Activated T-helper 2 cell treated with anti-CD3 and anti-CD28 coated beads, Interferon-gamma antibody, Interleukin-2, Interleukin-4, amounts not matched to agents 10 μg/mL and 5 μg/mL and 100 μg/mL, durations not matched to agents 14 hours and 24 hours and 36 hours (primary cell): ENCODE measurements at regions of chr16 and their contacts with region 1.

Region 1: DNA sequence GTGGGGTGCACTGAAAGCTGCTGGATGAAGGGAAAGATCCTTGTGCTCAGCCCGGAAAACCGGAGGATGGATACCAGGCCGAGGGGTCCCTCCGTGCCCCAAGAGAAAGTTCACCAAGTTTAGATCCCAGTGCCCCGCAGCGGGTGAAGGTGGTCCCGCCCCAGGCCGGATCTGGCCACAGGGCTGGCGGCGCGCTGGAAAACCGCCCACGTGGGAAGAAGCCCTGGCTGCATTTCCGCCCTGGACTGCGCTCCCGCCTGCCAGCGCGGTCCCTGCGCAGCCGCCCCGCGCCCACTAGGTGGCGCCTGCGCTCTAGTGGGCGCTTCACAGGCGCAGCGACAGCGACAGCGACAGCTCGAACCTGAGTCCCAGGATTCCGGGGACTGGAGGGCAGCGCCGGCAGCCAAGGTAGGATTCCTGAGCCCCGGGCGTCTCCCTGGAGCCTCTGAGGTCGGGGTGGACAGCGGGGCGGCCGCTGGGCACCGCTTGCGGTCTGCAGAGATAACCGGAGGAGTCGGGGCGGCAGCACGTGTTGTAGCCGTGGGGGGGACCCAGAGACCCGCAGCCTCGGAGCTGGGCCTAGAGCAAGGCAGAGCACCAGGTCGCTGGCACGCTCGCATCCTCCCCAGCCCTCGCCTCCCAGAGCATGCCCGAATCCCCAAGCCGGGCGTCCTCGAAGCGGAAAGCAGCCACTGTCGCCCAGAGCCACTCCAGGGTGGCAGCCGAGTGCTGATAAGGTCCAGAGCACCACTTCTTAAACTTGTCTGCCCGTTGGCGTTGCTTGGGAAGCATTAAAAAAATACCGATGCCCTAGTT is at the start of gene CHD9:
- DNase-seq: peak; percentile 69
- H3K4me3 Mint-ChIP-seq: peak within 1 kb of the TSS; percentile 84
- H3K27ac Mint-ChIP-seq: peak within 1 kb of the TSS; percentile 79
- H3K4me1 Mint-ChIP-seq: peaks cover 45% of the 10 kb centered on the region
- H3K27me3 Mint-ChIP-seq: no peaks in the 10 kb centered on the region
- total RNA-seq, gene CHD9: 25.0 and 27.1 TPM in 2 replicates

Region 2: GRCh38 chr16:52997922-52998321 is 57.0 kb before region 1 on chr16:
- intact Hi-C with region 1: no loop called
- DNase-seq: no peak
- H3K4me3 Mint-ChIP-seq: no peak overlapping the region
- H3K27ac Mint-ChIP-seq: no peak overlapping the region
- H3K4me1 Mint-ChIP-seq: no peaks in the 10 kb centered on the region
- H3K27me3 Mint-ChIP-seq: no peaks in the 10 kb centered on the region

Region 3: GRCh38 chr16:53031323-53031942 is 23.4 kb before region 1 on chr16:
- intact Hi-C with region 1: no loop called
- DNase-seq: no peak
- H3K4me3 Mint-ChIP-seq: no peak overlapping the region
- H3K27ac Mint-ChIP-seq: no peak overlapping the region
- H3K4me1 Mint-ChIP-seq: no peaks in the 10 kb centered on the region
- H3K27me3 Mint-ChIP-seq: peaks cover 6% of the 10 kb centered on the region

Region 4: DNA sequence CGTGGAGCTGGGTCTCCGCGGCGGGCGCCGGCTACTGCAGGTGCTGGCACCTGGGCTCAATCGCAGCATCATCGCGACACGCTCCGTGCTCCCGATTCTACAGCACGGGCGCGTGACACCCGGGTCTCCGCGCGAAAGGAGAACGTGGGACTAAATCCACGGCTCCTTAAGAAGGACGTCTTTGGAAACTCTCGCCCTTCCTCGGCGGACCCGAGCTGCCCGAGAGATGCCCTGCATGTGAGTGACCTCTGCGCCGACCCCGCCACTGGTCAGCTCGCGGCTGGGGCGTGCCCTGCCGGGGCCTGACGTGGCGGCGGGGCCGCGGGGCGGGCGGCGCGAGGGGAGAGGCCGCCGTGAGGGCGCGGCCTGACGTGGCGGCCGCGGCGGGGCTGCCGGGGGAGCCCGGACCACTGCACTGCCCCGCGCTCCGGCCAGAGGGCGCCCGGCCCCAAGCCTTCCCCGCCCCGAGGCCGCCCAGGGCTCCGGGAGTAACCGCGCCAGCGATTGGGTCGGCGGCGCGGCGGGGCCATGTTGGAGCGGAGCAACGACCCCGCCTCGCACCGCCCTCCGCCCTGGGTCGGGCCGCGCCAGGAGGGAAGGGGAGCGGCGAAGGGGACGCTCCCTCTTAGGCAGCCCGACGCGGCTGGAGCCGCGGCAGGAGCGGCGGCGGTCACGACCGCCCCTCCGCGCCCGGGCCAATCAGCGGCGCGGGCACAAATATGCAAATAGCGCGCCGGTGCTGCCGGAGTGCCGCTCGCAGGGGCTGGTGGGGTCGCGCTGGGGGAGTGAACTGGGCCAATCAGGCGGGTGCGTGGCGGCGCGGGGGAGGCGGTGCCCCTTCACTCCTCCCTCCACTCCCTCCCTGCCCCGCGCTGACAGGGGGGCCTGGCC is 75.5 kb after region 1 on chr16:
- intact Hi-C with region 1: loop called (anchors 1 kb)
- DNase-seq: peak; percentile 91
- H3K4me3 Mint-ChIP-seq: peak overlapping the region; percentile 78
- H3K27ac Mint-ChIP-seq: peak overlapping the region; percentile 67
- H3K4me1 Mint-ChIP-seq: peaks cover 23% of the 10 kb centered on the region
- H3K27me3 Mint-ChIP-seq: no peaks in the 10 kb centered on the region

Region 5: DNA sequence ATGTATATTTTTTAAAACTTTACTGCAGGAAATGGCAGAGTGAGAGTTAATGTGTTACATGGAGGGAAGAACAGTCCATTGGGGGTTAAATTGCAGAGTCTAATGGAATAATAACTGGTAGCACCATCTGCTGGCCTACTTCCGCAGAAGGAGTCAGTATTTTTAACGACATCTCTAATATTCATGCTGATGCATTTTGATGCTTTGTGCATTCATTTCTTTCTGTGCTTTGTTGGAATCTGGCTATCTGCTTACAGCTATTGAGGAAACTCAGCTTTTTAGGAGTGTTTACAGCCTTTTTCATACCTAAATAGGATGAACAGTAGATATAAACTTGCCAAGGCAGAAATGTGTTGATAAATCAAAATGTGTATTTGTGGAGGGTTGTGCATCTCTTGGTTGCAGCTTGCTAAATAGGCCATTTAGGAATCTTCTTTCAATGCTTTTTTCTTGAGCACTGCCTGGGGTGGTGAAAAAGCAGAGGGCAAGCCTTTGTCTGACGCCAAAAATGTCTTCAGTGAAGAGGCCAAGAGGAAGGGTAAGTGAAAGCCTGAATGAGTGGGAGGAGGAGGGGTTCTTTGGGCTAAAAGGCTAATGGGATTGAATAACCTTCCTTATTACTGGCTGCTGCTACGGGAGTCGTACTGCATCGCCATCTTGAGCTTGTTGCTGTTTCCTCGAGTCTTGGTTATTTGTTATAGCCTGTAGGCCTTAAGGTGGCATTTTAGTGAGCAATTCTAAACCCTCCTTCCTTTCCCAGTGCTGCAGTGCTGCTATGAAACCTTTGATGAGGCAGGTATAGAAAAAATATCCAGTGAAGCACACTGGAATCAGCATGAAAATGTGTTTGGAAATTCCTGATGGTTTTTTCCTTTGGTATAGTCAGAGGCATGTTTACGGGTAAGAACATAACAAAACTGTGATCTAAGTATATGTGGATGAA is 153.2 kb after region 1 on chr16:
- intact Hi-C with region 1: loop called (anchors 1 kb)
- DNase-seq: no peak
- H3K4me3 Mint-ChIP-seq: peak overlapping the region; percentile 80
- H3K27ac Mint-ChIP-seq: peak overlapping the region; percentile 89
- H3K4me1 Mint-ChIP-seq: peaks cover 22% of the 10 kb centered on the region
- H3K27me3 Mint-ChIP-seq: no peaks in the 10 kb centered on the region

Region 6: GRCh38 chr16:53457670-53458069 is 402.8 kb after region 1 on chr16:
- intact Hi-C with region 1: loop called (anchors 10 kb)
- DNase-seq: peak; percentile 81
- H3K4me3 Mint-ChIP-seq: peak overlapping the region; percentile 55
- H3K27ac Mint-ChIP-seq: peak overlapping the region; percentile 88
- H3K4me1 Mint-ChIP-seq: peaks cover 78% of the 10 kb centered on the region
- H3K27me3 Mint-ChIP-seq: no peaks in the 10 kb centered on the region

Region 7: GRCh38 chr16:53703590-53704444 is 648.9 kb after region 1 on chr16 and contains the starts of genes FTO and RPGRIP1L:
- intact Hi-C with region 1: loop called (anchors 10 kb)
- DNase-seq: peak; percentile 97
- H3K4me3 Mint-ChIP-seq: peak within 1 kb of the TSS; percentile 100
- H3K27ac Mint-ChIP-seq: peak within 1 kb of the TSS; percentile 98
- H3K4me1 Mint-ChIP-seq: peaks cover 25% of the 10 kb centered on the region
- H3K27me3 Mint-ChIP-seq: no peaks in the 10 kb centered on the region
- total RNA-seq, gene FTO: 62.1 and 62.7 TPM in 2 replicates
- total RNA-seq, gene RPGRIP1L: 7.7 and 9.6 TPM in 2 replicates